Activated CD8-positive, alpha-beta memory T cell treated with anti-CD3 and anti-CD28 coated beads, Interleukin-2, amount 10 ng/mL, durations not matched to agents 7 days and 5 days (primary cell): ENCODE measurements at regions of chr4 and their contacts with region 1.

Region 1: GRCh38 chr4:26330186-26330787 is 9.5 kb downstream of the RBPJ start:
- DNase-seq: no peak
- ATAC-seq: peak; percentile 81
- H3K4me3 Mint-ChIP-seq: no peak overlapping the region
- H3K27ac Mint-ChIP-seq: no peak overlapping the region
- H3K4me1 Mint-ChIP-seq: peaks cover 39% of the 10 kb centered on the region
- H3K27me3 Mint-ChIP-seq: no peaks in the 10 kb centered on the region

Region 2: DNA sequence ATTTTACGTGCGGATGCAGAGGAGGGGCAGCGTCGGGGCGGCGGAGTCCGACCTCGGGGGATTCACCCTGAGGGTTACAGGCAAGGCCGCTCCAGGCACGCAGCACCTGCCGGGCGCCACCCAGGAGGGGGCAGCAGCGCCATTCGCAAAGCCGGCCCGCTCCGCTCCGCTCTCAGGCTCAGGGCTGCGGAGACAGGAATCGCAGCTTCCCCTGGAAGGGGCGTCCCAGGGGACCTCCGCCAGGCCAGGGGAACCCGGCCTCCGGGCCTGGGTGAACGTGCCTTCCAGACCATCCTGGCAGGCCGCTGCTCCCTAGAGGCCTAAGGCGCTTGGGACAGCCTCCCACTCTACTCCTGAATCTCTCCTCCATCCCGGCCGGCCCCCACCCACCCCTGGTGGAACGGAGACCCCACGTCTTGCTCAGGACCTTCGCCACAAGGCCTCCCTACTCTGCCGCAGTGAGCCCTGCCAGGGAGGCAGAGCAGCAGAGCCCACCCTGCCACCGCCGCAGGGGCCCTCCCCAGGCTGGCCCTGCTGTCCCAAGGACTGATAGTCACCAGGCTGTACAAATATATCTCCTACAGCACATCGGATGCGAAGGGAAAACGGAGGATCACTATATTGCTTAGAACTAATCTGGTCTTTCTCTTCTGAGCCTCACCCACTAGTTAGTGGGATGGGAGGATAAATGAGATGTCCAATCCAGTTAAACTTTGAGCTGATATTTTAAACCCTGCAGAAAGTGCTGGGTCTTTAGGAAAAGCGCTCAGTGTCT is 301.3 kb before region 1 on chr4:
- CTCF ChIA-PET with region 1: interaction called, 20 read pairs
- DNase-seq: peak; percentile 79
- ATAC-seq: peak; percentile 97
- H3K4me3 Mint-ChIP-seq: no peak overlapping the region
- H3K27ac Mint-ChIP-seq: no peak overlapping the region
- H3K4me1 Mint-ChIP-seq: peaks cover 13% of the 10 kb centered on the region
- H3K27me3 Mint-ChIP-seq: peaks cover 2% of the 10 kb centered on the region

Region 3: GRCh38 chr4:26217961-26218676 is 112.2 kb before region 1 on chr4:
- CTCF ChIA-PET with region 1: no interaction called
- DNase-seq: no peak
- ATAC-seq: no peak
- H3K4me3 Mint-ChIP-seq: no peak overlapping the region
- H3K27ac Mint-ChIP-seq: no peak overlapping the region
- H3K4me1 Mint-ChIP-seq: peaks cover 5% of the 10 kb centered on the region
- H3K27me3 Mint-ChIP-seq: peaks cover 15% of the 10 kb centered on the region

Region 4: GRCh38 chr4:26319467-26319948 is 10.8 kb before region 1 on chr4:
- CTCF ChIA-PET with region 1: interaction called, 10 read pairs
- DNase-seq: peak; percentile 99
- ATAC-seq: peak; percentile 71
- H3K4me3 Mint-ChIP-seq: peak overlapping the region; percentile 97
- H3K27ac Mint-ChIP-seq: peak overlapping the region; percentile 99
- H3K4me1 Mint-ChIP-seq: peaks cover 39% of the 10 kb centered on the region
- H3K27me3 Mint-ChIP-seq: no peaks in the 10 kb centered on the region

Region 5: DNA sequence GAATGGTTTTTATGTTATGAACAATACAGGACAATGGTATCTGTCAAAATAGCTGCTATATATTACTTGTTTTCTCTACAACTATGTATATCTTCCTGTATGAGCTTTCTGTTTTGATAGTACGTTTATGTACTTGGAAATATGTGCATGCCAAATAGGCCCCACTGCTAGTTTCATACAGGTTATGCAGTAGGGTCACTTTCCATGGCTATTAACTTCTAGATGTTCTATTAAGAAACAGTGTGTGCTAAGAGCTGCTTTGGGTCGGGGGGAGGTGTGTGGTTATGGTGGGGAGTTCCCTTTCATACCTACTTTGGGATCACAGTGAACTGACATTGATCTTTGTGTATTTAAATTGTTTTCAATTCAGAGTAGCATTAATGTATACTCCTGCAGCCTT is 21.4 kb after region 1 on chr4:
- CTCF ChIA-PET with region 1: interaction called, 24 read pairs
- DNase-seq: no peak
- ATAC-seq: no peak
- H3K4me3 Mint-ChIP-seq: no peak overlapping the region
- H3K27ac Mint-ChIP-seq: no peak overlapping the region
- H3K4me1 Mint-ChIP-seq: peaks cover 31% of the 10 kb centered on the region
- H3K27me3 Mint-ChIP-seq: no peaks in the 10 kb centered on the region

Region 6: GRCh38 chr4:26410385-26411293 is 80.4 kb after region 1 on chr4:
- CTCF ChIA-PET with region 1: interaction called, 259 read pairs
- DNase-seq: no peak
- ATAC-seq: peak; percentile 82
- H3K4me3 Mint-ChIP-seq: no peak overlapping the region
- H3K27ac Mint-ChIP-seq: no peak overlapping the region
- H3K4me1 Mint-ChIP-seq: peaks cover 8% of the 10 kb centered on the region
- H3K27me3 Mint-ChIP-seq: no peaks in the 10 kb centered on the region

Region 7: GRCh38 chr4:26473893-26474292 is 143.6 kb after region 1 on chr4:
- CTCF ChIA-PET with region 1: no interaction called
- DNase-seq: no peak
- ATAC-seq: no peak
- H3K4me3 Mint-ChIP-seq: no peak overlapping the region
- H3K27ac Mint-ChIP-seq: no peak overlapping the region
- H3K4me1 Mint-ChIP-seq: no peaks in the 10 kb centered on the region
- H3K27me3 Mint-ChIP-seq: peaks cover 10% of the 10 kb centered on the region

Region 8: GRCh38 chr4:26490111-26490959 is 160.0 kb after region 1 on chr4 and contains the start of gene CCKAR:
- CTCF ChIA-PET with region 1: no interaction called
- DNase-seq: no peak
- ATAC-seq: no peak
- H3K4me3 Mint-ChIP-seq: no peak within 1 kb of the TSS
- H3K27ac Mint-ChIP-seq: no peak within 1 kb of the TSS
- H3K4me1 Mint-ChIP-seq: no peaks in the 10 kb centered on the region
- H3K27me3 Mint-ChIP-seq: peaks cover 23% of the 10 kb centered on the region
- total RNA-seq, gene CCKAR: not detected